ENCODE measurements at regions of chr6 and their contacts with region 1.

Region 1: DNA sequence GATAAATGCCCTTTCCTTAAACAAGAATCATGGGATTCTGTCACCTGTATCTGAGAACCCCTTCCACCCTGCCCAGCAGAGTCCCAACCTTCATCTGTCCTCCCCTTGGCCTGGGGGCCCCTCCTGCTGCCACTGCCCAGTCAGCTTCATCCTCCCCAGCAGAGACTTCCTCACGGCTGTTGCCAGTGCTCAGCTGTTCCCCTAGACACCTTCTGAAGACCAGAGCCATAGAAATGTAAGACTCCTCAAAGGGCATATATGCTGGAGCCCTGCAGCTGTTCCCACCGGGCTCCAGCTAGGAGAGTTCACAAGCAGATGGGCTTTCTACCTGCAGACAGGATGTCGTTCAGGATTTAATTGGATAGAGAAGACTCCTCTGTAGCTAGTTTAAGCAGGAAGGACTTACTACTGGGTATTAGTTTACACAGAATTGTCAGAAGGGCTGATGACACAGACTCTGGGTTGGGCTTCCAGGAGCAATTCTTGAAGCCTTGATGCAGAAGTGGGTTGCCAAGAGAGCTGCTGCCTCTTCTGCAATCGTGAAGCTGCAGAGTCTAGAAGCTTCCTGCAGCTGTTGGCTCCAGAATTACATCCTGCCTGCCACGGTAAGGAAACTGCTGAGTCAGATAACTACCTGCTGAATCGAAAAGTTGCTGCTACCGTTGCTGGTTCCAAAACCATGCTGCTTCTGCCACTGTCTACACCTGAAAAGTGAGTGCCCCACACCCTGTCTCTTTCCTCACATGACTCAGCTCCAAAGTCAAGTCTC is 57.1 kb upstream of the MLN start:
- DNase-seq: peak; percentile 65
- H3K4me3 Mint-ChIP-seq: no peak overlapping the region
- H3K27ac Mint-ChIP-seq: peak overlapping the region; percentile 33
- H3K4me1 Mint-ChIP-seq: peaks cover 55% of the 10 kb centered on the region
- H3K27me3 Mint-ChIP-seq: peaks cover 83% of the 10 kb centered on the region

Region 2: GRCh38 chr6:33904050-33904746 is 43.3 kb after region 1 on chr6:
- CTCF ChIA-PET with region 1: interaction called, 18 read pairs
- DNase-seq: peak; percentile 95
- H3K4me3 Mint-ChIP-seq: peak overlapping the region; percentile 63
- H3K27ac Mint-ChIP-seq: peak overlapping the region; percentile 98
- H3K4me1 Mint-ChIP-seq: peaks cover 85% of the 10 kb centered on the region
- H3K27me3 Mint-ChIP-seq: peaks cover 7% of the 10 kb centered on the region

Region 3: DNA sequence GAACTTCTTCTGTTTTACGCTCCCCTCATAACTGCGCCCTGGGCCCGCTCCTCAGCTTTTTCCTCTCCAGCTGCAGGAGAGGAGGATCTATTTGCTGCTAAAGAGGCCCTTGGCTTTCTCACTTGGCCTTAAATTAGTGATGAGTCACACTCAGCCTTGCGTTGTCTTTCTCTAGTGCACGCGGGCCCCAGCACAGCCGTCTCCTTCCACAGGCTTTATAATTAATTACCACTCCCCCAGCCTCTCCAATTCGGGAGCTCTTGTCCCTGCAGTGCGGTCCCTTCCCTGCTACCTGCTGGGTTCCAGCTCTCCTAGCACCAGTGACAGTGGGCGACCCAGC is 630.2 kb after region 1 on chr6:
- CTCF ChIA-PET with region 1: no interaction called
- DNase-seq: no peak
- H3K4me3 Mint-ChIP-seq: no peak overlapping the region
- H3K27ac Mint-ChIP-seq: no peak overlapping the region
- H3K4me1 Mint-ChIP-seq: peaks cover 17% of the 10 kb centered on the region
- H3K27me3 Mint-ChIP-seq: peaks cover 5% of the 10 kb centered on the region

Measured in activated naive CD4-positive, alpha-beta T cell treated with anti-CD3 and anti-CD28 coated beads, Interleukin-2, amount 10 ng/mL, durations not matched to agents 7 days and 5 days (primary cell).